Aorta (tissue), 5 donors: ENCODE measurements at regions of chr13 and their contacts with region 1.

Region 1: DNA sequence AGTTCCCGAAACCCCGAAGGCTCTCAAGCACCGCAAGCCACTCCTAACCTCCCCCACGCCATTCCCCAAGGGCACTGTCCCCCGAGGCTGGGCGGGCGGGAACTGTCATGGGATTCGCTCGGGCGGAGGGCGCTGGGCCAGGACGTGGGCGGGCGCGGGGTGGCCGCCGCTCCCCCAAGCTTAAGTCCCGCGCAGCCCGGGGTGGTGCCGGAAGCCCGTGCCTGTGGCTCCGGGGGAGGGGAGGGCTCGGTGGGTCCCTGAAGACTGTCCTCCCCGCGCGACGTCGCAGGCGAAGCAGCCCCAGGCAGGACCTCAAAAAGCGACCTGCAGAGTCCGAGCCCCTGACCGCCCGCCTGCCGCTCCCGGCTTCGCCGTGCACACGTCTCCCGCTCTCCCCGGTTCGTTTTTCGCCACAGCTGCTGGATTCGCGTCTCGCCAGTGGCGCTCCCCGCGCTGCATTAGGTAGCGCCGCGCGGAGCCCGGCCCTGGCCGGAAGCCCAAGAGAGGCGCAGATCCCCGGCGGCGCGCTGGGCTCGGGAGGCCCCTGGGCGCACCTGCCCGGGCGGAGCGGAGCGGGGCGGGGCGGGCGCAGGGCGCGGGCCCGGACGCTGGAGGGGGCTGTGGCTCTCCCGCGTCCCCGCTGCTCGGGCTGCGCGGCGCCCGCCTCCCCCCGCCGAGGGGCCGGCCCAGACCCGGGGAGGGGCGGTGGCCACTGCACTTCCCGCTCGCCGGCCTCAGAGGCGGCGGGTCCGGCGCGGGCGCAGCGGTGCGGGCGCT is at the start of gene FARP1:
- DNase-seq: peak; percentile 80 to 89
- ATAC-seq: peak; percentile 90
- H3K4me3 ChIP-seq: peak within 1 kb of the TSS; percentile 62 to 95
- H3K27ac ChIP-seq: no peak within 1 kb of the TSS
- H3K4me1 ChIP-seq: no peaks in the 10 kb centered on the region
- H3K27me3 ChIP-seq: no peaks in the 10 kb centered on the region
- total RNA-seq, gene FARP1: 39.0 to 41.7 TPM

Region 2: GRCh38 chr13:97967948-97968347 is 174.6 kb before region 1 on chr13:
- intact Hi-C with region 1: no loop called
- DNase-seq: no peak
- ATAC-seq: no peak
- H3K4me3 ChIP-seq: no peak overlapping the region
- H3K27ac ChIP-seq: no peak overlapping the region
- H3K4me1 ChIP-seq: no peaks in the 10 kb centered on the region
- H3K27me3 ChIP-seq: no peaks in the 10 kb centered on the region

Region 3: DNA sequence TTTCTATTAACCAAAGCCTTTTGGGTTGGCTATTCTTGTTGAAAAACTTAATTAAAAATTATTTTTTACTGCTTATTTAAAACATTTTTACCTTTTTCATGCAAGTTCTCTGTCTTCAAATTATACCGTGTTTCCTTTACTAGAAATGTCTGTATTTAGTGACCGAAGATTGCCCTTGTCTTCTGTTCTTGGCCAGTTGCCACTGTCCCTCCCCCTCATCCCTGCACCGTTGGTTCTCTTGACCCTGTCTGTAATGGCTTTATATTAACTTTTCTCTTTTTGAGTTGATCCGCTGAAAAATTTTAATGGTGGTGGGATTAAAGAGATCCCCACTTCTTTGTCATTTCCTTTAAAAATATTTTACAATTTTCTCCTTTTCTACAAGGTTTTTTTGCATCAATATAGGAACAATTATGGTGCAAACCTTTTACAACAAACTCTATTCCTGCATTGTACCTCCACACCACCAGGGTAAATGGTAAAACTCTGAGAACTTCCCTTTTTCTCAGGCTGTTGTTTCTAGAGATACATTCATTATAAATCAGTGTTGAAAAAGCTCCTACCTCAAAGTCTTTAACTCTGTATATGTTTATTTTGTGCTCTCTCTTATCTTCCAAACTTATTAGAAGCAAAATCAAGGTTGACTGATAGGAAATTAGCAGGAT is 47.4 kb after region 1 on chr13:
- intact Hi-C with region 1: no loop called
- DNase-seq: no peak
- ATAC-seq: no peak
- H3K4me3 ChIP-seq: no peak overlapping the region
- H3K27ac ChIP-seq: no peak overlapping the region
- H3K4me1 ChIP-seq: peaks cover 0 to 2% of the 10 kb centered on the region in 2 donors
- H3K27me3 ChIP-seq: no peaks in the 10 kb centered on the region

Region 4: DNA sequence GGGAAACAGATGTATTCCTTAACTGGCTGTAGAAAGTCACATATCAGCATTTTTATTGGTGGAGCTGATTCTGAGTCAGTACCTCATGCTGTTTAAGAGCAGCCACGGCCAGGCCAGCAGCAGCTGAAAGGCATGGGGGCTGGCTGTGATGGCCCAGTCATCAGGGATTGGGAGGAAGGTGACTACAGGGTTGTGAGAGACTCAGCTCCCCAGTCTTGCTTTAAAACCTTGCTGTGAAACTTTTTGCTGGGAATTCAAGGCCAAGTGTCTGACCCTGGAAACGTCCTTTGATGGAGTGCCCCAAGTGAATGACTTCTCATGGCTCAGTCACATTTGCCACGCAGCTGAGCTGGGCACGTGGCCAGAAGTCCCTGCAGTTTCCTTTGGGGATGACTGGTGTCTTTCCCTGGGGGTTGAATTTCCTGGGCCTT is 73.6 kb after region 1 on chr13:
- intact Hi-C with region 1: loop called in 1 of 2 experiments (anchors 10 kb)
- DNase-seq: peak; percentile 72 to 86
- ATAC-seq: no peak
- H3K4me3 ChIP-seq: no peak overlapping the region
- H3K27ac ChIP-seq: no peak overlapping the region
- H3K4me1 ChIP-seq: no peaks in the 10 kb centered on the region
- H3K27me3 ChIP-seq: no peaks in the 10 kb centered on the region

Region 5: GRCh38 chr13:98445340-98446233 is 303.0 kb after region 1 on chr13:
- intact Hi-C with region 1: loop called in 1 of 2 experiments (anchors 10 kb)
- DNase-seq: peak; percentile 76 to 91
- ATAC-seq: peak; percentile 87
- H3K4me3 ChIP-seq: no peak overlapping the region
- H3K27ac ChIP-seq: no peak overlapping the region
- H3K4me1 ChIP-seq: no peaks in the 10 kb centered on the region
- H3K27me3 ChIP-seq: no peaks in the 10 kb centered on the region